K562 (cell line): ENCODE measurements at regions of chr17 and their contacts with region 1.

Region 1: GRCh38 chr17:67157732-67158639 is 87.0 kb downstream of the HELZ start:
- DNase-seq: peak; percentile 31 to 76 (median 45)
- ATAC-seq: peak; percentile 97
- H3K4me3 ChIP-seq: no peak overlapping the region
- H3K27ac ChIP-seq: peak overlapping the region; percentile 23; the same call in 2 of the 3 replicates
- H3K4me1 ChIP-seq: peaks cover 0 to 15% of the 10 kb centered on the region in 2 experiments; a peak in 3 of 5 replicates
- H3K27me3 ChIP-seq: no peaks in the 10 kb centered on the region
- CTCF ChIP-seq: peak; percentile 45 to 64 (median 51); a peak in 5 of 6 replicates
- EP300 ChIP-seq: peak; percentile 57; the same call in 1 of the 2 replicates
- POLR2A ChIP-seq: no peak
- RAD21 ChIP-seq: peak; percentile 45 to 77

Region 2: GRCh38 chr17:66715745-66716156 is 442.2 kb before region 1 on chr17:
- CTCF ChIA-PET with region 1: no interaction called
- POLR2A ChIA-PET with region 1: no interaction called
- in situ Hi-C with region 1: no loop called
- intact Hi-C with region 1: loop called (anchors 2 kb)
- DNase-seq: peak in 2 of 4 experiments; percentile 56 to 62
- ATAC-seq: peak; percentile 80
- H3K4me3 ChIP-seq: no peak overlapping the region
- H3K27ac ChIP-seq: no peak overlapping the region
- H3K4me1 ChIP-seq: no peaks in the 10 kb centered on the region
- H3K27me3 ChIP-seq: no peaks in the 10 kb centered on the region
- CTCF ChIP-seq: peak; percentile 67 to 82 (median 73)
- EP300 ChIP-seq: no peak
- POLR2A ChIP-seq: no peak
- RAD21 ChIP-seq: peak; percentile 50 to 73

Region 3: DNA sequence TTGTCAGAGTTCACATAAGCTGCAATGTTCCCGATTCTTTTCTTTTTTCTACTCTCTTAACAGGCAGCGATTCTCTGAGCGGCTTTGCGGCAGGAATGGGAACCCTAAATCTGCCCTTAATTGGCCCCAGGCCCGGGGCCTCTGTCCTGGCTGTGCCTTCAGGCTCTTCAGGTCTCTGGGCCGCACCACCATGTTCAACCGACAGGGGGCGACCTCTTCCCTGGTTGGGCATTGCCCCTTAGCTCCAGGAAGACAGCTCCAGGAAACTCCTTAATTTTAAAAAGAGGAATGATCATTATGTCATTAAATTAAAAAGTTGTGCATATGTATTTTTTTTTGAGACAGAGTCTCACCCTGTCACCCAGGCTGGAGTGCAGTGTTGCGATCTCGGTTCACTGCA is 302.8 kb before region 1 on chr17:
- CTCF ChIA-PET with region 1: no interaction called
- POLR2A ChIA-PET with region 1: no interaction called
- in situ Hi-C with region 1: no loop called
- intact Hi-C with region 1: loop called (anchors 1 kb)
- DNase-seq: peak; percentile 62 to 76 (median 70)
- ATAC-seq: peak; percentile 86
- H3K4me3 ChIP-seq: no peak overlapping the region
- H3K27ac ChIP-seq: no peak overlapping the region
- H3K4me1 ChIP-seq: no peaks in the 10 kb centered on the region
- H3K27me3 ChIP-seq: peaks cover 0 to 13% of the 10 kb centered on the region in 2 experiments; a peak in 1 of 5 replicates
- CTCF ChIP-seq: peak; percentile 59 to 71 (median 65)
- EP300 ChIP-seq: no peak
- POLR2A ChIP-seq: no peak
- RAD21 ChIP-seq: peak in 1 of 2 experiments; percentile 54; a peak in 2 of 4 replicates

Region 4: GRCh38 chr17:67018471-67019437 is 139.2 kb before region 1 on chr17:
- CTCF ChIA-PET with region 1: no interaction called
- POLR2A ChIA-PET with region 1: no interaction called
- in situ Hi-C with region 1: no loop called
- intact Hi-C with region 1: loop called (anchors 5 kb)
- DNase-seq: no peak
- ATAC-seq: no peak
- H3K4me3 ChIP-seq: no peak overlapping the region
- H3K27ac ChIP-seq: no peak overlapping the region
- H3K4me1 ChIP-seq: no peaks in the 10 kb centered on the region; a peak in 1 of 5 replicates
- H3K27me3 ChIP-seq: peaks cover 51 to 95% of the 10 kb centered on the region in 2 experiments
- CTCF ChIP-seq: no peak
- EP300 ChIP-seq: no peak
- POLR2A ChIP-seq: no peak
- RAD21 ChIP-seq: no peak

Region 5: DNA sequence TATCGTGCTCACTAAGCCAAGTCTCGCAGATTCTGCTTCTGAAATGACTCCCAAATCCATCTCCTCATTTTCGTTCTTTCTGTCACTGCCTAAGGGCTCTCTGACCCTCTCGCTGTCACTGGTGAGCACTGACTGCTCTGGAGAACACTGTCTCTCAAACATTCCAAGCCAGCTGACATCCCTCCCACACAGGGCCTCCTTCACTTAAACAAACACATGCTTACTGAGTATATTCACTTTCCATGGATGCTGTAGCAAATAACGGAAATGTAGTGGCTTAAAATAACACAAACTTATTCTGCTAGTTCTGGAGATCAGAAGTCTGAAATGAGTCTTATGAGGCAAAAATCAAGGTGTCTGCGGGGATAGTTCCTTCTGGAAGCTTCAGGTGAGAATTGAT is 94.8 kb before region 1 on chr17:
- CTCF ChIA-PET with region 1: no interaction called
- POLR2A ChIA-PET with region 1: no interaction called
- in situ Hi-C with region 1: no loop called
- intact Hi-C with region 1: no loop called
- DNase-seq: no peak
- ATAC-seq: no peak
- H3K4me3 ChIP-seq: no peak overlapping the region
- H3K27ac ChIP-seq: no peak overlapping the region
- H3K4me1 ChIP-seq: no peaks in the 10 kb centered on the region; a peak in 1 of 5 replicates
- H3K27me3 ChIP-seq: peaks cover 3 to 4% of the 10 kb centered on the region in 2 experiments; a peak in 2 of 5 replicates
- CTCF ChIP-seq: no peak
- EP300 ChIP-seq: no peak
- POLR2A ChIP-seq: no peak
- RAD21 ChIP-seq: no peak